CD4-positive, alpha-beta memory T cell (primary cell): ENCODE measurements at regions of chr5 and their contacts with region 1.

Region 1: DNA sequence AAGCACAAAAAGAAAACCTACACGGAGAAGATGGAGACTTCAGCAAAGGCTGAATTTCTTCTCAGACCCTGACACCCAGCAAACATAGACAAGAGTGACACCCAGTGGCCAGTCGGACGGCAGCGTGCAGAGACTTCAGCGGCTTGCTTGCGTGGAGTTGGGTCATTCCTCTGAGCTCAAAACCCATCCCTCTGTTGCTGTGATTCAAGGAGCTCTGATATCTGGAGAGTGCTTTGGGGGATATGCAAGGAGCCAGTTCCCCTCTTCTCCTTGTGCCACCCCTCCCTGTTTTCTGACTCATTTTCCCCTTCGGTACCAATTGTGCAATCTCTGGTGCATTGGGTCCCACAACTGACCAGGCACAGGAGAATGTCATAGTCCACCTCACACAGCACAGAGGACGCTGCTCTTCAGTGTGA is 27.5 kb downstream of the SH3TC2 start:
- DNase-seq: peak; percentile 55 to 66 (median 57)
- H3K4me3 ChIP-seq: no peak overlapping the region
- H3K4me3 Mint-ChIP-seq: peak overlapping the region in 1 of 8 donors; percentile 22
- H3K27ac ChIP-seq: no peak overlapping the region
- H3K27ac Mint-ChIP-seq: peak overlapping the region in 1 of 7 donors; percentile 27
- H3K4me1 ChIP-seq: peaks cover 10% of the 10 kb centered on the region
- H3K4me1 Mint-ChIP-seq: peaks cover 3 to 38% (median 19%) of the 10 kb centered on the region in 4 donors
- H3K27me3 ChIP-seq: no peaks in the 10 kb centered on the region
- H3K27me3 Mint-ChIP-seq: peaks cover 0 to 3% of the 10 kb centered on the region in 2 donors

Region 2: DNA sequence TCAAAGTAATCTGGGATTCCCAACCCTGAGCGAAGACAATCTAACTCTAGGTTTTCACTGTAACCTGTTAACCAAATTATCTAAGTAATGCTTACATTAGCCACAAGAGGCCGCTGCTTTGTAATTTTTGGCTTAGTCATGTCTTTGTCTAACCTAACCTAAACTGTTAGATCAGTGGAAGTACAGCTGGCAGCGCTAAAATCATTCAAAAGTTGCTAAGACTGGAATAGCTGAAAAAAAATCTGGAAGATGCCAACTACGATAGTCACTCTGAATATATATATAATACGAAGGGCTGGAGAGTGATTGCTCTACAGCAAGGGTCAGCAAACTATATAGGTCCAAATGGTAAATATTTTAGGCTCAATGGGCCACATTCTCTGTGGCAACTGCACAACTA is 591.4 kb before region 1 on chr5:
- CTCF ChIA-PET with region 1: interaction called, 23 read pairs
- POLR2A ChIA-PET with region 1: no interaction called
- intact Hi-C with region 1: no loop called
- DNase-seq: peak; percentile 42 to 48 (median 43)
- H3K4me3 ChIP-seq: no peak overlapping the region
- H3K4me3 Mint-ChIP-seq: no peak overlapping the region
- H3K27ac ChIP-seq: no peak overlapping the region
- H3K27ac Mint-ChIP-seq: no peak overlapping the region
- H3K4me1 ChIP-seq: no peaks in the 10 kb centered on the region
- H3K4me1 Mint-ChIP-seq: peaks cover 0 to 1% (median 0%) of the 10 kb centered on the region in 4 donors
- H3K27me3 ChIP-seq: no peaks in the 10 kb centered on the region
- H3K27me3 Mint-ChIP-seq: no peaks in the 10 kb centered on the region

Region 3: DNA sequence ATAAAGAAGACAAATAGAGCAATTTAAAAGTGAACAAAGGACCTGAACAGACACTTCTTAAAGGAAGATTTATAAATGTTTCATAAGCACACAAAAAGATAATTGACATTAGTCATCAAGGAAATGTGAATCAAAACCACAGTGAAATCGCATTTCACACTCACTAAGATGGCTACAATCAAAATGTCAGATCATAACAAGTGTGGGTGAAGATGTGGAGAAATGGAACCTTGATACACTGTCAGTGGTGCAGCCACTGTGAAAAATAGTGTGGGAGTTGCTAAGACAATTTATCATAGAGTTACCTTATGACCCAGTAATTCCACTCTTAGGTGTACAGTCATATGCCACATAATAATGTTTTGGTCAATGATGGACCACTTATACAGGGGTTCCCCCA is 326.5 kb before region 1 on chr5:
- CTCF ChIA-PET with region 1: no interaction called
- POLR2A ChIA-PET with region 1: no interaction called
- intact Hi-C with region 1: no loop called
- DNase-seq: no peak
- H3K4me3 ChIP-seq: no peak overlapping the region
- H3K4me3 Mint-ChIP-seq: no peak overlapping the region
- H3K27ac ChIP-seq: no peak overlapping the region
- H3K27ac Mint-ChIP-seq: no peak overlapping the region
- H3K4me1 ChIP-seq: no peaks in the 10 kb centered on the region
- H3K4me1 Mint-ChIP-seq: no peaks in the 10 kb centered on the region
- H3K27me3 ChIP-seq: no peaks in the 10 kb centered on the region
- H3K27me3 Mint-ChIP-seq: peaks cover 4 to 13% of the 10 kb centered on the region in 2 donors

Region 4: GRCh38 chr5:149011074-149011476 is 24.3 kb before region 1 on chr5:
- CTCF ChIA-PET with region 1: interaction called, 12 read pairs
- POLR2A ChIA-PET with region 1: no interaction called
- intact Hi-C with region 1: no loop called
- DNase-seq: no peak
- H3K4me3 ChIP-seq: no peak overlapping the region
- H3K4me3 Mint-ChIP-seq: no peak overlapping the region
- H3K27ac ChIP-seq: no peak overlapping the region
- H3K27ac Mint-ChIP-seq: no peak overlapping the region
- H3K4me1 ChIP-seq: no peaks in the 10 kb centered on the region
- H3K4me1 Mint-ChIP-seq: no peaks in the 10 kb centered on the region
- H3K27me3 ChIP-seq: no peaks in the 10 kb centered on the region
- H3K27me3 Mint-ChIP-seq: peaks cover 0 to 5% of the 10 kb centered on the region in 2 donors

Region 5: GRCh38 chr5:149024477-149024876 is 10.9 kb before region 1 on chr5:
- CTCF ChIA-PET with region 1: interaction called, 24 read pairs
- POLR2A ChIA-PET with region 1: no interaction called
- intact Hi-C with region 1: no loop called
- DNase-seq: no peak
- H3K4me3 ChIP-seq: no peak overlapping the region
- H3K4me3 Mint-ChIP-seq: no peak overlapping the region
- H3K27ac ChIP-seq: no peak overlapping the region
- H3K27ac Mint-ChIP-seq: no peak overlapping the region
- H3K4me1 ChIP-seq: no peaks in the 10 kb centered on the region
- H3K4me1 Mint-ChIP-seq: no peaks in the 10 kb centered on the region
- H3K27me3 ChIP-seq: no peaks in the 10 kb centered on the region
- H3K27me3 Mint-ChIP-seq: peaks cover 0 to 6% of the 10 kb centered on the region in 2 donors

Region 6: GRCh38 chr5:149060325-149060724 is 24.9 kb after region 1 on chr5:
- CTCF ChIA-PET with region 1: interaction called, 28 read pairs
- POLR2A ChIA-PET with region 1: no interaction called
- intact Hi-C with region 1: no loop called
- DNase-seq: no peak
- H3K4me3 ChIP-seq: no peak overlapping the region
- H3K4me3 Mint-ChIP-seq: no peak overlapping the region
- H3K27ac ChIP-seq: no peak overlapping the region
- H3K27ac Mint-ChIP-seq: no peak overlapping the region
- H3K4me1 ChIP-seq: no peaks in the 10 kb centered on the region
- H3K4me1 Mint-ChIP-seq: no peaks in the 10 kb centered on the region
- H3K27me3 ChIP-seq: no peaks in the 10 kb centered on the region
- H3K27me3 Mint-ChIP-seq: peaks cover 3 to 9% of the 10 kb centered on the region in 2 donors

Region 7: DNA sequence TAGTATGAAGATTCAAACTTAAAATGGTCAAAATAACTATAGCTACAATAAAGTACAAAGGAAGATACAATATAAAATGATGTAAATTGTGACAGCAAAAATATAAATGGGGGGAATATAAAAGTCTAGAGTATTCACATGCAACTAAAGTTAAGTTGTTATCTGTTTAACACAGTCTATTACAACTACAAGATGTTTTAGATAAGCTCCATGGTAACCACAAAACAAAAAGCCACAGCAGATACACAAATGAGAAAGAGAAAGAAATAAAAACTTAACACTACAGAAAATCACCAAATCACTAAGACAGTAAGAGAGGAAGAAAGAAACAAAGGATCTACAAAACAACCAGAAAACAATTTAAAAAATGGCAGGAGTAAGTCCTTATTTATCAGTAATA is 44.5 kb after region 1 on chr5:
- CTCF ChIA-PET with region 1: no interaction called
- POLR2A ChIA-PET with region 1: no interaction called
- intact Hi-C with region 1: no loop called
- DNase-seq: peak in 4 of 5 donors; percentile 29 to 71 (median 46)
- H3K4me3 ChIP-seq: no peak overlapping the region
- H3K4me3 Mint-ChIP-seq: peak overlapping the region in 5 of 8 donors; percentile 6 to 75 (median 20)
- H3K27ac ChIP-seq: no peak overlapping the region
- H3K27ac Mint-ChIP-seq: peak overlapping the region; percentile 20 to 96 (median 54)
- H3K4me1 ChIP-seq: peaks cover 7% of the 10 kb centered on the region
- H3K4me1 Mint-ChIP-seq: peaks cover 18 to 29% (median 25%) of the 10 kb centered on the region in 4 donors
- H3K27me3 ChIP-seq: no peaks in the 10 kb centered on the region
- H3K27me3 Mint-ChIP-seq: peaks cover 0 to 4% of the 10 kb centered on the region in 2 donors

Region 8: DNA sequence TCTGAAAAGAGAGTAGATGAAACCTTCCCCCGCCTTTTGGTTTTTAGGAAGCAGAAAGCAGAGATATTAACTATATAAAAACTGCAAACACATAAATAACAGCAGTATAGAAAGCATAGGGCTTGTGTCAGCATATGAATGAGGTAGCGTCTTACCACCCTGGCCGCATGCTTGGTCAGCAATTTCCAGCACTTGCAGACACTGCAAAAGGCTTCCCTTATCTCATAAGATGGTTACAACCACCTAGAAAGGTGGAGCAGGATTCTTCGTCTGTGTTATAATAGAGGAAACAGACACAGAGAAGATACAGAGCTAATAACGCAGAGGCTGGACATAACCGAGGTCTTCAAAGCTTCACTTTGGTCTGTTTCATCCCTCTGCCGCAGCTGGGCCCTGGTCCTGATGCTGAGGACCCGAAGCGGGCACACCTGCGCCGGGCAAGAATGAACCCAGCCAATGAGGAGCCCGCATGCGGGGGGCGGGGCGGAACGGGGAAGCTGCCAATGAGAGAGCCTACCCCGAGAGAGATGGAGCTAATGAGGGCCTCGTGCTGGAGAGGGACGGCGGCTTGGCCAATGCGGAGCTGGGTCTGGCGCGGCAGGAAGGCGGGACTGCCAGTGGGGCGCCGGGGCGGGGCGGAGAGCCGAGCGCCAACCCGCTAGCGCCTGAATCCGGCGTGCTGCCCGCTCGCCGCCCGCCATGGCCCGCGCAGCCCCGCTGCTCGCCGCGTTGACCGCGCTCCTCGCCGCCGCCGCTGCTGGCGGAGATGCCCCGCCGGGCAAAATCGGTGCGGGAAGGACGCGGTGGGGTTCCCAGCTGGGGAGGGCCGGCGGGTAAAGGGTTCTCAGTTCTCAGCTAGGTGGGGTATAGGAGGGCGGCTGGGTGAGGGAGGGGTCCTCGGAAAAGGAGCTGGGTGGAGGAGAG is 322.3 kb after region 1 on chr5 and contains the start of gene PCYOX1L:
- CTCF ChIA-PET with region 1: no interaction called
- POLR2A ChIA-PET with region 1: no interaction called
- intact Hi-C with region 1: no loop called
- DNase-seq: peak; percentile 91 to 97 (median 95)
- H3K4me3 ChIP-seq: peak within 1 kb of the TSS; percentile 70 to 82
- H3K4me3 Mint-ChIP-seq: peak within 1 kb of the TSS; percentile 94 to 98 (median 95)
- H3K27ac ChIP-seq: peak within 1 kb of the TSS; percentile 75
- H3K27ac Mint-ChIP-seq: peak within 1 kb of the TSS; percentile 92 to 98 (median 96)
- H3K4me1 ChIP-seq: peaks cover 71% of the 10 kb centered on the region
- H3K4me1 Mint-ChIP-seq: peaks cover 46 to 83% (median 63%) of the 10 kb centered on the region in 4 donors
- H3K27me3 ChIP-seq: no peaks in the 10 kb centered on the region
- H3K27me3 Mint-ChIP-seq: no peaks in the 10 kb centered on the region
- total RNA-seq, gene PCYOX1L: 40.4 to 43.9 TPM